Prostate gland (tissue), 2 donors: ENCODE measurements at regions of chr6 and their contacts with region 1.

Region 1: GRCh38 chr6:56292505-56293181 is 45.3 kb upstream of the COL21A1 start:
- DNase-seq: no peak
- H3K4me3 ChIP-seq: no peak overlapping the region
- H3K27ac ChIP-seq: no peak overlapping the region
- H3K4me1 ChIP-seq: no peaks in the 10 kb centered on the region
- H3K27me3 ChIP-seq: no peaks in the 10 kb centered on the region
- CTCF ChIP-seq: peak; percentile 32 to 66 (median 50)
- POLR2A ChIP-seq: no peak

Region 2: GRCh38 chr6:55276745-55277530 is 1015.7 kb before region 1 on chr6:
- intact Hi-C with region 1: loop called (anchors 10 kb)
- DNase-seq: peak; percentile 36
- H3K4me3 ChIP-seq: no peak overlapping the region
- H3K27ac ChIP-seq: no peak overlapping the region
- H3K4me1 ChIP-seq: no peaks in the 10 kb centered on the region
- H3K27me3 ChIP-seq: no peaks in the 10 kb centered on the region
- CTCF ChIP-seq: peak in 3 of 4 experiments; percentile 48 to 62 (median 60)
- POLR2A ChIP-seq: no peak

Region 3: GRCh38 chr6:55980627-55981211 is 311.9 kb before region 1 on chr6:
- intact Hi-C with region 1: loop called (anchors 1 kb)
- DNase-seq: peak; percentile 12
- H3K4me3 ChIP-seq: no peak overlapping the region
- H3K27ac ChIP-seq: no peak overlapping the region
- H3K4me1 ChIP-seq: no peaks in the 10 kb centered on the region
- H3K27me3 ChIP-seq: no peaks in the 10 kb centered on the region
- CTCF ChIP-seq: peak; percentile 57 to 82 (median 70)
- POLR2A ChIP-seq: no peak

Region 4: DNA sequence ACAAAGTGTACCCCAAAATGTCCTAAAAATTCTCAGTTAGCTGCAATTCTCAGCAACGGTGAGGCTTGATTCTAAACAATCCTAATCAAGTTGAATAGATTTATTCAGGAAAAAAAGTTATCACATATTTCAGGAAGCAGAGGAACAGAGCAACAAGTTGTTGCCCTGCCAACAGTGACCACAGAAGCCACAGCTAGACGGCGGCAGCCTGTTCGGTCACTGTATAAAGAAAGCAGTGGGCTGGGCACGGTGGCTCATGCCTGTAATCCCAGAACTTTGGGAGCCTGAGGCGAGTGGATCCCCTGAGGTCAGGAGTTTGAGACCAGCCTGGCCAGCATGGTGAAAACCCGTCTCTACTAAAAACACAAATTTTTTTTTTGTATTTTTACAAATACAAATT is 246.1 kb before region 1 on chr6:
- intact Hi-C with region 1: loop called (anchors 10 kb)
- DNase-seq: no peak
- H3K4me3 ChIP-seq: no peak overlapping the region
- H3K27ac ChIP-seq: no peak overlapping the region
- H3K4me1 ChIP-seq: no peaks in the 10 kb centered on the region
- H3K27me3 ChIP-seq: no peaks in the 10 kb centered on the region
- CTCF ChIP-seq: no peak
- POLR2A ChIP-seq: no peak